ENCODE measurements at regions of chr2 and their contacts with region 1.

Region 1: GRCh38 chr2:105235388-105236054 is 6.0 kb upstream of the GPR45 start:
- DNase-seq: peak; percentile 69
- ATAC-seq: peak; percentile 79
- H3K4me3 Mint-ChIP-seq: no peak overlapping the region
- H3K27ac Mint-ChIP-seq: no peak overlapping the region
- H3K4me1 Mint-ChIP-seq: peaks cover 23% of the 10 kb centered on the region
- H3K27me3 Mint-ChIP-seq: peaks cover 26% of the 10 kb centered on the region

Region 2: GRCh38 chr2:105037572-105038382 is 197.7 kb before region 1 on chr2 and contains the start of gene MRPS9:
- CTCF ChIA-PET with region 1: no interaction called
- DNase-seq: peak; percentile 98
- ATAC-seq: peak; percentile 99
- H3K4me3 Mint-ChIP-seq: peak within 1 kb of the TSS; percentile 91
- H3K27ac Mint-ChIP-seq: peak within 1 kb of the TSS; percentile 88
- H3K4me1 Mint-ChIP-seq: peaks cover 22% of the 10 kb centered on the region
- H3K27me3 Mint-ChIP-seq: no peaks in the 10 kb centered on the region
- total RNA-seq, gene MRPS9: 24.5 to 30.8 TPM

Region 3: DNA sequence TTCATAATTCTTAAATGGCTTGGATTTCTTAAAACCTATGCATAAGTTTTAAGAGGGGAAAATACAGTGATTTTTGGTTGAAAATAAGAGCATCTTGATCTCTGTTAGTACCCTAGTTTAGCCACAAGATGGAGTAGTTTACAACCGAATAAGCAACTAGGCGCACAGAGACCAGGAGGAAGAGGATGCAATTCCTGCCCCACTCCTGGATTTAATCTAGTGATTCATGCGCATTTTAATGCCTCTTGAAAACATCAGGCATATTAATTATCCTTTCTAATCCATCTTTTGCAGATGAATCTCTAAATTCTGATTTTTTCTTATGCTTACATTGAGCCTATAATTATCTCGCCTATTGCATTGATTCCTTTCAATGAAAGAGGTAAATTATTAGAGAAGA is 121.0 kb before region 1 on chr2:
- CTCF ChIA-PET with region 1: interaction called, 96 read pairs
- DNase-seq: no peak
- ATAC-seq: no peak
- H3K4me3 Mint-ChIP-seq: no peak overlapping the region
- H3K27ac Mint-ChIP-seq: no peak overlapping the region
- H3K4me1 Mint-ChIP-seq: no peaks in the 10 kb centered on the region
- H3K27me3 Mint-ChIP-seq: no peaks in the 10 kb centered on the region

Region 4: DNA sequence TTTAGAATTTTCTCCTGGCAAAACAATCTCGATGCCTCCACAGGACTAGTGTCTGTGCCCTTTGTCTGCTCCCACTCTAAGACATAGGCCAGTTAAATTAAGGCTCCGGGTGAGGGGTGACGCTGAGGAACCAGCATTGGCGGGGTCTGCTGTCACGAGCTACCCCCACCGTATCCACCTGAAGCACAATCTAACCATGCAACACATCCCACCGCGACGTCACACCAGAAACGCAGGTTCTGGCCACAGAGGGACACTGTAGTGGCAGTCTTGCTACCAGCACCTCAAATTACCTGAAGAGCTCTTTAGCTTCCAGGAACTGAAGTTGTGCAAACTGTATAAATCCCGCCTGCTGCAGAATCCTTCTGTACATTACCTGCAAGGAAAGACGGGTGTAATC is 48.5 kb after region 1 on chr2:
- CTCF ChIA-PET with region 1: no interaction called
- DNase-seq: no peak
- ATAC-seq: no peak
- H3K4me3 Mint-ChIP-seq: no peak overlapping the region
- H3K27ac Mint-ChIP-seq: no peak overlapping the region
- H3K4me1 Mint-ChIP-seq: peaks cover 2% of the 10 kb centered on the region
- H3K27me3 Mint-ChIP-seq: no peaks in the 10 kb centered on the region

Measured in activated CD8-positive, alpha-beta memory T cell treated with anti-CD3 and anti-CD28 coated beads, Interleukin-2, amount 10 ng/mL, durations not matched to agents 7 days and 5 days (primary cell).